ENCODE measurements at regions of chr11 and their contacts with region 1.

Region 1: DNA sequence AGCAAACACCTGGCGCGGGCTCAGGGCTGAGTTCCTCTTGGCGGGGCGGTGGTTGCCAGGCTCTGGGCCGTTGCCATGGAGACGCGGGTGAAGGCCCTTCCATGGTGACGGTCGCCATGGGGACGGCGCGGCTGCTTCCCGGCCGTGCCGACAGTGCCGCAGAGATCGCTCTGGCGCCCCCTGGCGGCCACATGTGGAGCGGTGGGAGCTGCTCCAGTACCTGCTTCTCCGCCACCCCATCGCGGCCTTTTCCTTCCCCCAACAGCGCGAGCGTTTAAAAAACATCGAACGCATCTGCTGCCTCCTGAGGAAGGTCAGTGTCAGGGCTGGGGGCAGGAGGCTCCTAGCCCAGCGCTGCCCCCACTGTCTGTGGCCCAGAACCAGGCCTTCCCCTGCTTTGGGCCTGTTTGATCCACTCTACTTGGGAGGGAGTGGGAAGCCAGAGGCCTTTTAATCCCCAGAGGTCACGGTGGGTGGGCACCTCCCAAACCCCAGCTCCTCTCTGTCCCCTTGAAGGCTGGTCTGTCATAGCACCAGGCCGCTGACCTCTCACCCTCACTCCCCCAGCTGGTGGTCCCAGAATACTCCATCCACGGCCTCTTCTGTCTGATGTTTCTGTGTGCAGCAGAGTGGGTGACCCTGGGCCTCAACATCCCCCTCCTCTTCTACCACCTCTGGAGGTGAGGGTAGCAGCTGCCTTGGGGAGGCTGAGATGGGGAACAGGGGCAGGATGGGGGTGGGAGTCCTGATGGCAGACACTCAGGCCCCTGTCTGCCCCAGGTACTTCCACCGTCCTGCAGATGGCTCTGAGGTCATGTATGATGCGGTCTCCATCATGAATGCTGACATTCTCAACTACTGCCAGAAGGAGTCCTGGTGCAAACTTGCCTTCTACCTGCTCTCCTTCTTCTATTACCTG is 4.8 kb downstream of the CNIH2 start:
- H3K4me3 Mint-ChIP-seq: no peak overlapping the region
- H3K27ac Mint-ChIP-seq: no peak overlapping the region
- H3K4me1 Mint-ChIP-seq: peaks cover 45% of the 10 kb centered on the region
- H3K27me3 Mint-ChIP-seq: peaks cover 34% of the 10 kb centered on the region

Region 2: DNA sequence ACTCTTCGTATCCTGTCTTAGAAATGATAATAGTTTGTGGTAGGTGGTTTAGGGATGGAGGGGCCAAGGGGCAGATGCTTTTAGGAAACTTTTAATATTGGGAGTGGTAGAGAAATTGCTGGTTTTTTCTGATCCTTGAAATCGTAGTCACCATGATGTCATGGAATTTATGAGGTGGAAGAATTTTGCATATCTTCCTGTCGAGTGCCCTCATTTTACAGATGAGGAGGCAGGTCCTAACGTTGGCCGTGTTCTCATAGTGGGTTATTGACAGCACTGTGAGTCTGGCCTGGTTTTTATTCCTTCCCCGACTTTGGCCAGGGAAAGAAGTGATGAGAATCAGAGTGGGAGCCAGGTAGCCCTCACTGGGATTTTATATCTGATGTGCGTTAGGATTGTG is 221.5 kb before region 1 on chr11:
- intact Hi-C with region 1: no loop called
- H3K4me3 Mint-ChIP-seq: no peak overlapping the region
- H3K27ac Mint-ChIP-seq: no peak overlapping the region
- H3K4me1 Mint-ChIP-seq: peaks cover 21% of the 10 kb centered on the region
- H3K27me3 Mint-ChIP-seq: no peaks in the 10 kb centered on the region

Region 3: GRCh38 chr11:66268283-66268951 is 14.3 kb before region 1 on chr11 and contains the start of gene RAB1B:
- intact Hi-C with region 1: loop called (anchors 2 kb)
- H3K4me3 Mint-ChIP-seq: peak within 1 kb of the TSS; percentile 91
- H3K27ac Mint-ChIP-seq: peak within 1 kb of the TSS; percentile 87
- H3K4me1 Mint-ChIP-seq: peaks cover 44% of the 10 kb centered on the region
- H3K27me3 Mint-ChIP-seq: no peaks in the 10 kb centered on the region

Region 4: DNA sequence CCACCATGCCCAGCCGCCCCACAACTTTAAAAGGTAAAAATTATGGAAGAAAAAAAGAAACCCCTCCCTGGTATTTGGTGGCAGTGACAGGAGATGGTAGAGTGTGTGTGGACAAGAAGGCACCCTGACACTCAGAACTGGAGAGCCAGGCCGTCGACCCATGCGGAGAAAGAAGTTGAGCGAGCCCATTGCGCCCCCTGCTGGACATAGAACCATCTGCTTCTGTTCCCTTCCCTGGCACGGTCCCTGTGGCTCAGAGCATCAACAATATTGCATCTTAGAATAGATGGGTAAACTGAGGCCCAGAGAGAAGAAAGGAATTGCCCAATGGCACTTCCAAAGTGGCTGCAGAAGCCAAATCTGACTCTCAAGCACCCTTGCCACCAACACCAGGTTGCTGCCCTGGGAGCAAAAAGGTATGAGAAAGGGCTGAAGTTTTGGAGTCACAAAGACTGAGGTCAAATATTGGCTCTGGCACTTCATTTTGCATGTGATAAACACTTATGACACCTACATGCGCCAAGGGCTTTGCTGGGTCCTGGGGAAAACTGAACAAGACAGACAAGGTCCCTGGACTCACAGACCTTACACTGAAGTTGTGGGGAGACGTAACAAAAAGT is 147.4 kb after region 1 on chr11:
- intact Hi-C with region 1: no loop called
- H3K4me3 Mint-ChIP-seq: no peak overlapping the region
- H3K27ac Mint-ChIP-seq: no peak overlapping the region
- H3K4me1 Mint-ChIP-seq: peaks cover 17% of the 10 kb centered on the region
- H3K27me3 Mint-ChIP-seq: peaks cover 6% of the 10 kb centered on the region

Measured in dendritic cell treated with granulocyte-macrophage colony-stimulating factor and Interleukin-4, amounts not matched to agents 40 ng/mL and 50 ng/mL, for 4 days (primary cell).